ENCODE measurements at regions of chr3 and their contacts with region 1.

Region 1: DNA sequence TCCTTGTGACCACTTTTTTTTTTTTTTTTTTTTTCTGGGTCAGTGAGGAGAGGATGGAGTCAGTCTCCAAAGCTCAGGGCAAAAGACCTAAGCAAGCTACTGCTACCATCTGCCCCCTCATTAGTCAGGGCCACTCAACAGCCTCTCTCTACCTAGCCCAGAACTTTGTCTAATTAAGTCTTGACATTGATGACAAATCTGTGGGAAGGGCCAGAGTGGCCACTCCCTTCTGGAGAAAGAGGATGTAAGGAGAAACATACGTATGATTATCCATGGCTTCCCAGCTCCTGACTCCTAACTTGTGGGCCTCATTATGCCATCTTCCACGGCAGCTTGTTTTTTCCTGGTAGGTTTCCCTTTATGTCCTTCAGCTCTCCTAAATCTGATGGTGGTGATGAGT is 37.9 kb downstream of the NR1I2 start:
- DNase-seq: no peak
- ATAC-seq: no peak
- H3K4me3 ChIP-seq: no peak overlapping the region
- H3K4me3 Mint-ChIP-seq: no peak overlapping the region
- H3K27ac ChIP-seq: no peak overlapping the region
- H3K27ac Mint-ChIP-seq: no peak overlapping the region
- H3K4me1 ChIP-seq: no peaks in the 10 kb centered on the region
- H3K4me1 Mint-ChIP-seq: no peaks in the 10 kb centered on the region
- H3K27me3 ChIP-seq: peaks cover 0 to 2% (median 0%) of the 10 kb centered on the region in 4 experiments
- H3K27me3 Mint-ChIP-seq: no peaks in the 10 kb centered on the region
- CTCF ChIP-seq: no peak

Region 2: DNA sequence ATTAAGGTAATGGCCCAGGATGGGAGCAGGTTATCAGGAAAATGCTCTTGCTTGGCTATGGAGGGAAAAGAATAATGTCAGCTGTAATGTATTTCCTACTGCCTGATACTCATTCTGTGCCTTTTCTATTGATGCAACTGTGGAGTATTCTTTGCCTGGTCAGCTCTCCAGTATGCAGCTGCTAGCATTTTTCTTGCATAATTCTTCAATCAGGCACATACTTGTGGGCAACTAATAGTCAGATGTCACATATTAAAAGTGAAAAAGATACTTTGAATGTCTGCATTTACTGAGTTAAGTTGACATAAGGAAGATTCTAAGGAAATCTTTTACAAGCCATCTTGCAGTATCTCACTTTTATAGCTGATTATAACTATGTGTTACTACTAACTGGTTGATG is 289.9 kb before region 1 on chr3:
- CTCF ChIA-PET with region 1: no interaction called
- POLR2A ChIA-PET with region 1: no interaction called
- intact Hi-C with region 1: no loop called
- DNase-seq: no peak
- ATAC-seq: no peak
- H3K4me3 ChIP-seq: no peak overlapping the region
- H3K4me3 Mint-ChIP-seq: no peak overlapping the region
- H3K27ac ChIP-seq: no peak overlapping the region
- H3K27ac Mint-ChIP-seq: no peak overlapping the region
- H3K4me1 ChIP-seq: no peaks in the 10 kb centered on the region
- H3K4me1 Mint-ChIP-seq: peaks cover 9% of the 10 kb centered on the region
- H3K27me3 ChIP-seq: no peaks in the 10 kb centered on the region
- H3K27me3 Mint-ChIP-seq: no peaks in the 10 kb centered on the region
- CTCF ChIP-seq: no peak

Region 3: DNA sequence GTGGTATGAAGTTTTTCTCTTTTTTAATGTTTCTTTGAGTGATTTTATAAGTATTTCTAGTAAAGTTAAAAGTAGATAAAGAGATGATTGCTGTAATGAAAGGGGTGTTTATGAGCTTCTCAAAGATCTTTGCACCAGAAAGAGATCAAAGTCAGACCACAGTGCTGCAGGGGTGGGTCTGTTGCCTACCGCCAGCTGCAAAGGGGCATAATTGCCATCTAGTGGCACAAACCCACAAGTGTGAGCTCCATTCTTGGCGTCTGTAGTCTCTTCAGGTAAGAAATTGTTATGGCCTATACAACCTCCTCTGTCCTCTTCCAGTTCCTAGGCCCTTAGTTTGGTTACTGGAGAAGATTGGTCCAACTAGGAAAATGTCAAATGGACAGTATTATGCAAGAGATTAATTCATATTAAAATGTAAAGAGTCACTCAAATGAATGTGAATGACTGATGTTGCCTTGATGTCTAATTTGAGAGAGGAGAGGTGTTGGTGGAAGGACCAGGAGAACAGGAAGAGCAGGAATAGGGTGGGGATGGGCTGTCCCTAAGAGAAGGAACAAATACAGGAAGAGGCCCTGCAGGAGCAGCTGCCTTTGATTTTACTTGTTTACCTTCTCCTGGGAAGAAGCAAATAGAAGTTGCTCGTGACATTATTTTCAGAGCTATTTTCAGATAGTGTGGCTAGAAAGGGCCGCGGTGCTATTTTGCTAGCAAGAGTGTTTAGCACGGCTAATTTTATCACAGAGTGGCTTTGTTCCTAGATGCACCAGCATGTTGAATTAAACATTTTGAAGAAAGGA is 327.5 kb after region 1 on chr3:
- CTCF ChIA-PET with region 1: no interaction called
- POLR2A ChIA-PET with region 1: no interaction called
- intact Hi-C with region 1: loop called (anchors 1 kb)
- DNase-seq: peak; percentile 47
- ATAC-seq: peak; percentile 51
- H3K4me3 ChIP-seq: no peak overlapping the region
- H3K4me3 Mint-ChIP-seq: no peak overlapping the region
- H3K27ac ChIP-seq: no peak overlapping the region
- H3K27ac Mint-ChIP-seq: no peak overlapping the region
- H3K4me1 ChIP-seq: no peaks in the 10 kb centered on the region
- H3K4me1 Mint-ChIP-seq: no peaks in the 10 kb centered on the region
- H3K27me3 ChIP-seq: no peaks in the 10 kb centered on the region
- H3K27me3 Mint-ChIP-seq: peaks cover 4% of the 10 kb centered on the region
- CTCF ChIP-seq: peak; percentile 58

Region 4: GRCh38 chr3:120182724-120183524 is 363.1 kb after region 1 on chr3:
- CTCF ChIA-PET with region 1: no interaction called
- POLR2A ChIA-PET with region 1: no interaction called
- intact Hi-C with region 1: loop called (anchors 2 kb)
- DNase-seq: peak; percentile 9
- ATAC-seq: no peak
- H3K4me3 ChIP-seq: no peak overlapping the region
- H3K4me3 Mint-ChIP-seq: no peak overlapping the region
- H3K27ac ChIP-seq: no peak overlapping the region
- H3K27ac Mint-ChIP-seq: no peak overlapping the region
- H3K4me1 ChIP-seq: no peaks in the 10 kb centered on the region
- H3K4me1 Mint-ChIP-seq: no peaks in the 10 kb centered on the region
- H3K27me3 ChIP-seq: no peaks in the 10 kb centered on the region
- H3K27me3 Mint-ChIP-seq: peaks cover 28% of the 10 kb centered on the region
- CTCF ChIP-seq: peak; percentile 18

Measured in B cell (primary cell).